Activated CD8-positive, alpha-beta memory T cell treated with anti-CD3 and anti-CD28 coated beads, Interleukin-2, amount 10 ng/mL, durations not matched to agents 7 days and 5 days (primary cell): ENCODE measurements at regions of chr2 and their contacts with region 1.

Region 1: GRCh38 chr2:29130295-29130694 is 15.1 kb downstream of the CLIP4 start:
- DNase-seq: peak; percentile 63
- ATAC-seq: peak; percentile 96
- H3K4me3 Mint-ChIP-seq: peak overlapping the region; percentile 50
- H3K27ac Mint-ChIP-seq: peak overlapping the region; percentile 85
- H3K4me1 Mint-ChIP-seq: peaks cover 38% of the 10 kb centered on the region
- H3K27me3 Mint-ChIP-seq: no peaks in the 10 kb centered on the region

Region 2: DNA sequence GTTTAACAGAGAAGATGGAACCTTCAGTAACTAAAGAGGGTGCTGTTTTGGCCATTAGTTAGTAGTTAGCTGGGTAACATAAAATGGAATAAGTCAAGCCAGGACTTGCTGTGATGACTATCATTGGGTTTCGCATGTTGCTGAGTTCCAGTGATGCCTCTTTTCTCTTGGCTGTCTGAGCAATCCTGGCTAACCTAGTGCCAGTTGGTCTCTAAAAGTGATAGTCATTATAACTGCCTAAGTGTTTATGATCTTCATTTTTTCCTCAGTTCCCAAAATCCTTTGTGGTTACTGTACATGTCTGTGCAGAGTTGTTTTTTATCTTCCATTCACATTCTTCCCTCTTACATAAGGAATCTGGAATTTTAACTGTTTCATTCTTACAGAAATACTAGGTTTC is 202.4 kb before region 1 on chr2:
- CTCF ChIA-PET with region 1: no interaction called
- DNase-seq: no peak
- ATAC-seq: no peak
- H3K4me3 Mint-ChIP-seq: no peak overlapping the region
- H3K27ac Mint-ChIP-seq: peak overlapping the region; percentile 58
- H3K4me1 Mint-ChIP-seq: peaks cover 4% of the 10 kb centered on the region
- H3K27me3 Mint-ChIP-seq: no peaks in the 10 kb centered on the region

Region 3: GRCh38 chr2:29115797-29116781 is 14.2 kb before region 1 on chr2:
- CTCF ChIA-PET with region 1: interaction called, 27 read pairs
- DNase-seq: peak; percentile 93
- ATAC-seq: peak; percentile 70
- H3K4me3 Mint-ChIP-seq: peak overlapping the region; percentile 80
- H3K27ac Mint-ChIP-seq: peak overlapping the region; percentile 97
- H3K4me1 Mint-ChIP-seq: peaks cover 50% of the 10 kb centered on the region
- H3K27me3 Mint-ChIP-seq: peaks cover 4% of the 10 kb centered on the region